ENCODE measurements at regions of chr3 and their contacts with region 1.

Region 1: GRCh38 chr3:196568246-196569002 is at the starts of genes FBXO45 and WDR53:
- DNase-seq: peak; percentile 88 to 98 (median 95)
- ATAC-seq: peak; percentile 96
- H3K4me3 ChIP-seq: peak within 1 kb of the TSS; percentile 100
- H3K4me3 Mint-ChIP-seq: peak within 1 kb of the TSS; percentile 87 to 99 (median 95)
- H3K27ac ChIP-seq: peak within 1 kb of the TSS; percentile 87
- H3K27ac Mint-ChIP-seq: peak within 1 kb of the TSS; percentile 91 to 98 (median 96)
- H3K4me1 ChIP-seq: peaks cover 21 to 31% of the 10 kb centered on the region in 2 donors
- H3K4me1 Mint-ChIP-seq: peaks cover 23 to 53% (median 46%) of the 10 kb centered on the region in 7 donors
- H3K27me3 ChIP-seq: no peaks in the 10 kb centered on the region
- H3K27me3 Mint-ChIP-seq: no peaks in the 10 kb centered on the region
- total RNA-seq, gene FBXO45: 2.8 to 15.9 (median 7.1) TPM
- total RNA-seq, gene WDR53: 13.6 to 31.5 (median 22.7) TPM

Region 2: GRCh38 chr3:196432137-196432879 is 136.1 kb before region 1 on chr3 and contains the start of gene UBXN7:
- CTCF ChIA-PET with region 1: no interaction called
- POLR2A ChIA-PET with region 1: no interaction called
- intact Hi-C with region 1: loop called (anchors 1 to 2 kb)
- DNase-seq: peak; percentile 92 to 97 (median 95)
- ATAC-seq: peak; percentile 94
- H3K4me3 ChIP-seq: peak within 1 kb of the TSS; percentile 100
- H3K4me3 Mint-ChIP-seq: peak within 1 kb of the TSS; percentile 81 to 98 (median 86)
- H3K27ac ChIP-seq: peak within 1 kb of the TSS; percentile 90
- H3K27ac Mint-ChIP-seq: peak within 1 kb of the TSS; percentile 68 to 95 (median 81)
- H3K4me1 ChIP-seq: peaks cover 4 to 6% of the 10 kb centered on the region in 2 donors
- H3K4me1 Mint-ChIP-seq: peaks cover 17 to 39% (median 32%) of the 10 kb centered on the region in 7 donors
- H3K27me3 ChIP-seq: no peaks in the 10 kb centered on the region
- H3K27me3 Mint-ChIP-seq: peaks cover 0 to 2% (median 0%) of the 10 kb centered on the region in 5 donors
- total RNA-seq, gene UBXN7: 52.6 to 90.6 (median 77.0) TPM

Region 3: DNA sequence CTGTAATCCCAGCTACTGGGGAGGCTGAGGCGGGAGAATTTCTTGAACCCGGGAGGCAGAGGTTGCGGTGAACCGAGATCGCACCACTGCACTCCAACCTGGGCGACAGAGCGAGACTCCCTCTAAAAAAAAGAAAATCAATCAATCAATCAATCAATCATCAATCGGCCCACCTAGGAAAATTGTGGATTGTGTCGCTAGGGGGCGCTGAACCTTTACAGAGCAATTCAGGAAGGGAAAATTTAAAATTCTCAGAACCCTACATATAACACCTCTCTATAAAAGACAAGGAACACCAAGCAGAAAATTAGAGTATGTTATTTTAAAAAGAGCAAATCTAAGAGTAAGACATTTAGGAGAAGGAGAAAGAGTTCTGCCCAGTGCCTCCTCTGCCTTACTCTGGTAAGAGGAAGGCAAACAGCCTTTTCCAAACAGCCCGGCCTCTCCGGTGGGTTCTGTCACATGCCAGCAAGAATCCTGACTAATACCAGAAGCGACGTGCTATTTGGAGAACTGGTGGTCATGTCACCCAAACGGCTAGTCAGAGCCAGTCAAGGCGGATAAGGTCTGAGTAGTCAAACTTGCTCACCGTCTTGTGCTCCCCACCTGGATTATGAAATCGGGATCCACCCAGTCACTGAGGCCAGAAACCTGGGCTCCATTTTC is 31.0 kb before region 1 on chr3:
- CTCF ChIA-PET with region 1: no interaction called
- POLR2A ChIA-PET with region 1: no interaction called
- intact Hi-C with region 1: loop called in 1 of 2 experiments (anchors 1 kb)
- DNase-seq: peak; percentile 19 to 60 (median 43)
- ATAC-seq: peak; percentile 46
- H3K4me3 ChIP-seq: no peak overlapping the region
- H3K4me3 Mint-ChIP-seq: no peak overlapping the region
- H3K27ac ChIP-seq: no peak overlapping the region
- H3K27ac Mint-ChIP-seq: no peak overlapping the region
- H3K4me1 ChIP-seq: no peaks in the 10 kb centered on the region
- H3K4me1 Mint-ChIP-seq: peaks cover 0 to 8% (median 0%) of the 10 kb centered on the region in 7 donors
- H3K27me3 ChIP-seq: no peaks in the 10 kb centered on the region
- H3K27me3 Mint-ChIP-seq: peaks cover 0 to 14% (median 0%) of the 10 kb centered on the region in 5 donors

Region 4: DNA sequence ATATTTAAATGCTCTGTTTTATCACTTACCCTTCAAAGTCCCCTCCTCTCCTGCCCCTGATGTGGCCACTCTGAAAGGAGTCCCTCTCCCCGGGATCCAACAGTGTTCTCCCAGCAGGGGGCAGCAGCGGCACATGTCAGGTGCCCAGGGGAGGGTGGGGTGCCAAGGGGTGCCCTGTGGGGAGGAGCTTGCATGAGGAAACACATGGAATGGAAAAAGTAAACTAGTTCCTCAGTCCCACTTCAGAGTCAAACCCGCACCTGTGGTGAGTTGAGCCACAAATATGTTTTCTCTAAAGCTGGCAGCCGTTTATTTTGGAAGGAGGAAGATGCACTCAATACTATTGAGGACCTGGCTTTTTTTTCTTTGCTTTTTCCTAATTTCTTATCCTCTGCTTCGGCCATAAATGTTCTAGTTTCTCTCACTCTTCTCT is 40.9 kb after region 1 on chr3:
- CTCF ChIA-PET with region 1: no interaction called
- POLR2A ChIA-PET with region 1: interaction called, 7 read pairs
- intact Hi-C with region 1: loop called in 1 of 2 experiments (anchors 2 kb)
- DNase-seq: peak; percentile 78 to 93 (median 88)
- ATAC-seq: peak; percentile 96
- H3K4me3 ChIP-seq: no peak overlapping the region
- H3K4me3 Mint-ChIP-seq: peak overlapping the region; percentile 49 to 80 (median 74)
- H3K27ac ChIP-seq: peak overlapping the region; percentile 39
- H3K27ac Mint-ChIP-seq: peak overlapping the region; percentile 72 to 93 (median 88)
- H3K4me1 ChIP-seq: peaks cover 23 to 26% of the 10 kb centered on the region in 2 donors
- H3K4me1 Mint-ChIP-seq: peaks cover 28 to 50% (median 47%) of the 10 kb centered on the region in 7 donors
- H3K27me3 ChIP-seq: no peaks in the 10 kb centered on the region
- H3K27me3 Mint-ChIP-seq: peaks cover 0 to 5% (median 0%) of the 10 kb centered on the region in 5 donors

Region 5: DNA sequence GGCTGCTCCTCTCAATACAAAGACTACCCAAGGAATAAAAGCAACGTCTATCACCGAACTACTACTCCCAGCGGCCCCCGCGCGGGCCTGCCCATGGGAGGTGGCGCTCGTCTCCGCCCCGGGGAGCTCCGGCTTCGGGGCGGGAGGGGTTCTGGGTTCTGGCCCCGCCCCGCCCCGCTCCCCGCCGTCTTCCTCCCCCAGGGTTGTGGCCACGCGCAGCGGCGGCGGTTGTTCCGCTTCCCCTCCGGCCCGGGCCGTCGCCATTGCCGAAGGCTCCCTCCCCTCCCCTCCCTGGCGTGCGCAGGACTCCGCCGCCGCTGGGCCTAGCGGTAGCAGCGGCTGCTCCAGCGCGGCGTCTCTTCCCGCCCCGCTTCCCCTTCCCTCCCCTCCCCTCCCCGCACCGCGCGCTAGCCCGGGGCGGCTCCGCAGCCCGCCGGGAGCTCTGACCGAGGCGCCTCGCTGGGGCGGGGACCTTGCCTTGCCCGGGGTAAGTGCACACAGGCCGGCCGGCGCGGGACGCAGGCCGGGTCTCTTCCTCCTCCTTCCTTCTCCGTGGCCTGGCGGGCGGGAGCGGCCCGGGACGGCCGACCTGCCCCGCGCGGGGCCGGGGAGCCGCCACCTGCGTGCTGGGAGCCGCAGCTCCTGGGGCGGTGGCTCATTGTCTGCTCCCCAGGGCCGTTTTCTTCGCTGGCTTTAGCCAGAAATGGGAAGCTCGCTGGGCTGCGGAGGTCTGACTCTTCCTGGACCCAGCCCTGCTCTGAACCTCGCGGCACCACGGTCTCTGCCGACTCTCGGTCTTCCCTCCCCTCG is 171.5 kb after region 1 on chr3 and contains the start of gene PAK2:
- CTCF ChIA-PET with region 1: no interaction called
- POLR2A ChIA-PET with region 1: interaction called, 6 read pairs
- intact Hi-C with region 1: loop called (anchors 1 to 2 kb)
- DNase-seq: peak; percentile 80 to 92 (median 85)
- ATAC-seq: peak; percentile 95
- H3K4me3 ChIP-seq: peak within 1 kb of the TSS; percentile 78
- H3K4me3 Mint-ChIP-seq: peak within 1 kb of the TSS; percentile 90 to 100 (median 100)
- H3K27ac ChIP-seq: peak within 1 kb of the TSS; percentile 94
- H3K27ac Mint-ChIP-seq: peak within 1 kb of the TSS; percentile 93 to 100 (median 99)
- H3K4me1 ChIP-seq: peaks cover 15 to 25% of the 10 kb centered on the region in 2 donors
- H3K4me1 Mint-ChIP-seq: peaks cover 25 to 38% (median 29%) of the 10 kb centered on the region in 7 donors
- H3K27me3 ChIP-seq: no peaks in the 10 kb centered on the region
- H3K27me3 Mint-ChIP-seq: no peaks in the 10 kb centered on the region
- total RNA-seq, gene PAK2: 57.7 to 97.3 (median 79.7) TPM

Region 6: DNA sequence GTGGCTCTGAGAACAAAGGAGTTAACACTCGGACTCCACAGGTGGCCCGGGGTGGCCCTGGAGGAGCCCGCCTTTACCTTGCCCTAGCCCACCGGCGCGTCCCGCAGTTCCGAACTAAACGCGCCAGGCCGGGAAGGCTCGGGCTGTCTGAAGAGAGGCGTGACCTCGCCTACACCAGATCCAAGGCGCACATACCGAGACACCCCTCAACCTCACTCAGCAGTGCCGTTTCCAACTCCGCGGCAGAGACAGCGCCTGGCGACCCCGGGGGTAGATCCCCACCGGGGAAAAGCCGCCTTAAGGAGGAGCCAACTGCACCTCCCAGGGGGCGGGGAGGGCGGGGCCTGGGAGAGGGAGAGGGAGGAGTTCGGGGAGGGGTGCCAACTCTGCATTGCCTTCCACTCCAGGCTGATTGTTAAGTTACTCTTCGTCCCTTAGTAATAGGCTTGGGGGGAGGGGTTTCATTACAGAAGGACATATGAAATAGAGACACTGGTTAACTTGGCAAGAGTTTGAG is 730.0 kb after region 1 on chr3 and contains the start of gene DLG1:
- CTCF ChIA-PET with region 1: no interaction called
- POLR2A ChIA-PET with region 1: no interaction called
- intact Hi-C with region 1: loop called in 1 of 2 experiments (anchors 1 kb)
- DNase-seq: peak in 4 of 9 donors; percentile 61 to 81 (median 72)
- ATAC-seq: peak; percentile 70
- H3K4me3 ChIP-seq: peak within 1 kb of the TSS; percentile 86
- H3K4me3 Mint-ChIP-seq: peak within 1 kb of the TSS; percentile 88 to 98 (median 96)
- H3K27ac ChIP-seq: peak within 1 kb of the TSS; percentile 79
- H3K27ac Mint-ChIP-seq: peak within 1 kb of the TSS; percentile 92 to 98 (median 94)
- H3K4me1 ChIP-seq: peaks cover 5 to 11% of the 10 kb centered on the region in 2 donors
- H3K4me1 Mint-ChIP-seq: peaks cover 9 to 40% (median 22%) of the 10 kb centered on the region in 7 donors
- H3K27me3 ChIP-seq: no peaks in the 10 kb centered on the region
- H3K27me3 Mint-ChIP-seq: peaks cover 0 to 35% (median 10%) of the 10 kb centered on the region in 5 donors
- total RNA-seq, gene DLG1: 79.5 to 96.5 (median 86.0) TPM

Region 7: GRCh38 chr3:197959898-197960693 is 1391.7 kb after region 1 on chr3 and contains the start of gene LMLN:
- CTCF ChIA-PET with region 1: no interaction called
- POLR2A ChIA-PET with region 1: no interaction called
- intact Hi-C with region 1: no loop called
- DNase-seq: peak; percentile 93 to 96 (median 95)
- ATAC-seq: peak; percentile 98
- H3K4me3 ChIP-seq: peak within 1 kb of the TSS; percentile 91
- H3K4me3 Mint-ChIP-seq: peak within 1 kb of the TSS; percentile 86 to 98 (median 92)
- H3K27ac ChIP-seq: peak within 1 kb of the TSS; percentile 86
- H3K27ac Mint-ChIP-seq: peak within 1 kb of the TSS; percentile 92 to 97 (median 96)
- H3K4me1 ChIP-seq: peaks cover 26 to 27% of the 10 kb centered on the region in 2 donors
- H3K4me1 Mint-ChIP-seq: peaks cover 33 to 74% (median 48%) of the 10 kb centered on the region in 7 donors
- H3K27me3 ChIP-seq: no peaks in the 10 kb centered on the region
- H3K27me3 Mint-ChIP-seq: peaks cover 0 to 2% (median 0%) of the 10 kb centered on the region in 5 donors
- total RNA-seq, gene LMLN: 4.2 to 10.9 (median 6.8) TPM

Measured in naive thymus-derived CD4-positive, alpha-beta T cell (primary cell).